ENCODE measurements at regions of chr15 and their contacts with region 1.

Region 1: DNA sequence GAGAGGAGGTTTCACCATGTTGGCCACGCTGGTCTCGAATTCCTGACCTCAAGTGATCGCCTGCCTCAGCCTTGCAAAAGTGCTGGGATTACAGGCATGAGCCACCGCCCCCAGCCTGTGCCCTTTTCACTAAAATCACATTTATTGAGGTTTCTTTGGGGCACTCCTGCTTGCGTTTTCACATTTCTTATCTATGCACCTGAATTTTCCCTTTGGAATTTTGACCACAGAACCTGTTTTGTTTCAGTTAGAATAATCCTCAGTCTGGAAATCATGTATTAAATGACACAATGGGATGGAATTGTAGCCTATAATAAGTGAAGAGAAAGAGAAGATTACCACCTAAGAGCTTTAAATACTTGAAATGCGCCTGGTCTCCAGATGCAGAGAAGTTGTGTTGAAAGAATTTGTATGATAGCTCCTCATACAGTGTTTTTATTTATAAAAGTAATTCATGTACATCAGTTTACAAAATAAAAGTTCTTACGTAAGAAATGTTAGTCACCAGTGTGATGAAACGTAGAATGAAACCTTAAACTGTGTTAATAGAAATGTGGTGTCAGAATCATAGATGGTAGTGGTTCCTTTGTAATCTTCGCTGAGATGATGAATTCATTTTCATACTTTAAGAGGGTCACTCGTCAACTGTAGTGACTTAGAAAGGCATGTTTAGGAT is 107.0 kb downstream of the TCF12 start:
- DNase-seq: no peak
- ATAC-seq: no peak
- H3K4me3 ChIP-seq: no peak overlapping the region
- H3K4me3 Mint-ChIP-seq: no peak overlapping the region
- H3K27ac ChIP-seq: no peak overlapping the region
- H3K27ac Mint-ChIP-seq: no peak overlapping the region
- H3K4me1 ChIP-seq: peaks cover 9% of the 10 kb centered on the region
- H3K4me1 Mint-ChIP-seq: peaks cover 39% of the 10 kb centered on the region
- H3K27me3 ChIP-seq: no peaks in the 10 kb centered on the region
- H3K27me3 Mint-ChIP-seq: no peaks in the 10 kb centered on the region
- CTCF ChIP-seq: no peak

Region 2: DNA sequence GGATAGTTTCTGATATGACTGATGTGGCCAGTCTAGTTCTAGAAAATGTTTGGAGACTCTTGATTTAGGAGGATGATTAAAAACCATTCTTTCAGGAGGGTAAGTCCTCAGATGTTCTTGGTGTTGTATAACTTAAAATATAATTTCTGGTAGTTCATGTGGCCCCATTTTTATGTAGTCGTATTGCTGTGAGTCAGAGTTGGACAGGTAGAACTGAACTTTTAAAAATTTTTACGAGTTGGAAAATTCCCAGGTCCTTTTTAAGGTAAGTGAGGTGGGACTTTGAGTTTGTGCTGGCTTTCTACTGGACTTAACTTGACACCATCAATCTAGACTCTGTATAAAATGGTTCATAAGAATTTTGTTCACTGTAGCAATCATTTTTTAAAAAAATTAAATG is 14.7 kb before region 1 on chr15:
- CTCF ChIA-PET with region 1: no interaction called
- POLR2A ChIA-PET with region 1: no interaction called
- intact Hi-C with region 1: loop called in 1 of 2 experiments (anchors 2 kb)
- DNase-seq: no peak
- ATAC-seq: no peak
- H3K4me3 ChIP-seq: no peak overlapping the region
- H3K4me3 Mint-ChIP-seq: no peak overlapping the region
- H3K27ac ChIP-seq: no peak overlapping the region
- H3K27ac Mint-ChIP-seq: no peak overlapping the region
- H3K4me1 ChIP-seq: no peaks in the 10 kb centered on the region
- H3K4me1 Mint-ChIP-seq: peaks cover 48% of the 10 kb centered on the region
- H3K27me3 ChIP-seq: no peaks in the 10 kb centered on the region
- H3K27me3 Mint-ChIP-seq: no peaks in the 10 kb centered on the region
- CTCF ChIP-seq: no peak

Measured in CD8-positive, alpha-beta T cell (primary cell).